Panc1 (cell line): ENCODE measurements at regions of chr13 and their contacts with region 1.

Region 1: DNA sequence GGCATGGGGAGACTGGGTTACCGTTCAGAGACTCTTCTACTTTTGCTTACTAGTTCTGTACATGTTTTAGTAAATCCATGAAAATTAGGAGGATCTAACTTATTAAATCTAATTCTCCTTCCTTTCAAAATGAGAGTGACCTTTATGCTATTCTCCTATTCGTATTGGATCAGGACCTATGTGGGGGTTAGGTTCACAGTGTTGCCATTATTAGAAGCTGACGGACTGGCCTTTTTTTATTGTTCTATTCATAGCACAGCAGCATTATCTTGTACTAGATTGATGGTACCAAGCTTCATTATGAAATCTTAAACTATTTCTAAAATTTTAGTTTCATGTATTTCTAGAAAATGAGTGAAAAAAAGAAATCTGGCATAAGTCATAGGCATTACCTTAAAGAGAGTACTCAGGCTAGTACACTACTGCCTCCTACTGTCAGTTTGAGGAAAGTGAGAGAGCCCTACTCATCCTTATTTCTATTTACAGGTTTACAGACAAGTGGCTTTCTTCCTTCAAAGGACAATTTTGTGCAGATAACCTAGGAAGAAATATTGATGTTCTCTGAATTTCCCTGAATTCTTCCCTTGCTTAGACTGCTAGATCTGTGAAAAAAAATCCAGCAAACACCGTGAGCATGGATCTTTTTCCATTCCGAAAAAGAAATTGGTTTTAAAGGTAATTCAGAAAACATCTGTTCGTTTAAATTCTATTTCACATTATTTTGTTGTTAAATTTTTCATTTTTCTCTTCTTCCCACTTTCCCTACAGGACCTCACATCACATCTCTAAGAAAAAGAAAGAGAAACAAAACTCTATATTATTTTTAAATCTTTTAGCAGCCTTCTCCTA is 485.5 kb downstream of the DIAPH3 start:
- DNase-seq: no peak
- ATAC-seq: no peak
- H3K4me3 ChIP-seq: no peak overlapping the region
- H3K27ac ChIP-seq: no peak overlapping the region
- H3K4me1 ChIP-seq: no peaks in the 10 kb centered on the region
- H3K27me3 ChIP-seq: no peaks in the 10 kb centered on the region
- CTCF ChIP-seq: peak; percentile 64; the same call in 1 of the 2 replicates

Region 2: GRCh38 chr13:59144700-59145099 is 533.5 kb before region 1 on chr13:
- CTCF ChIA-PET with region 1: no interaction called
- POLR2A ChIA-PET with region 1: no interaction called
- in situ Hi-C with region 1: no loop called
- intact Hi-C with region 1: loop called (anchors 5 kb)
- DNase-seq: no peak
- ATAC-seq: no peak
- H3K4me3 ChIP-seq: no peak overlapping the region
- H3K27ac ChIP-seq: no peak overlapping the region
- H3K4me1 ChIP-seq: no peaks in the 10 kb centered on the region
- H3K27me3 ChIP-seq: no peaks in the 10 kb centered on the region
- CTCF ChIP-seq: no peak

Region 3: DNA sequence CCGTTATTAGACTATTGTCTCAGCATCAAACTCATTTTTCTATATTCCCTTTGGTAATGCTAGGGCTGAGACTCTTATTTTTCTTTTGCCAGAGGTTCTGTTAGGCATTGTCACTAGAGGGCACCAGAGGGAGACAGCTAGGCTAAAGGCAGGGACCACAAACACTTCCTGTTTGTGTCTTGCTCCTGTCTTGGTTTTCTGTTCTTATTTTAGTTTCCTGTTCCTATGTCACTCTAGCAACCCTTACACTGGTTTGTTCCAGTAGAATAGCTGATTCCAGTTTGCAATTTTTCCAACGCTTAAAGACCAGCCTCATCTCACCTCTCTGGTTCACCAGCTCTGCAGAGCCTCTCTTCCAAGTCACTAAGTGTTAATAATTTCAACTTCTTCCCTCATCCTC is 286.5 kb before region 1 on chr13:
- CTCF ChIA-PET with region 1: interaction called, 3 read pairs
- POLR2A ChIA-PET with region 1: no interaction called
- in situ Hi-C with region 1: no loop called
- intact Hi-C with region 1: loop called (anchors 10 kb)
- DNase-seq: peak; percentile 36
- ATAC-seq: no peak
- H3K4me3 ChIP-seq: no peak overlapping the region
- H3K27ac ChIP-seq: no peak overlapping the region
- H3K4me1 ChIP-seq: no peaks in the 10 kb centered on the region
- H3K27me3 ChIP-seq: no peaks in the 10 kb centered on the region
- CTCF ChIP-seq: peak; percentile 64

Region 4: DNA sequence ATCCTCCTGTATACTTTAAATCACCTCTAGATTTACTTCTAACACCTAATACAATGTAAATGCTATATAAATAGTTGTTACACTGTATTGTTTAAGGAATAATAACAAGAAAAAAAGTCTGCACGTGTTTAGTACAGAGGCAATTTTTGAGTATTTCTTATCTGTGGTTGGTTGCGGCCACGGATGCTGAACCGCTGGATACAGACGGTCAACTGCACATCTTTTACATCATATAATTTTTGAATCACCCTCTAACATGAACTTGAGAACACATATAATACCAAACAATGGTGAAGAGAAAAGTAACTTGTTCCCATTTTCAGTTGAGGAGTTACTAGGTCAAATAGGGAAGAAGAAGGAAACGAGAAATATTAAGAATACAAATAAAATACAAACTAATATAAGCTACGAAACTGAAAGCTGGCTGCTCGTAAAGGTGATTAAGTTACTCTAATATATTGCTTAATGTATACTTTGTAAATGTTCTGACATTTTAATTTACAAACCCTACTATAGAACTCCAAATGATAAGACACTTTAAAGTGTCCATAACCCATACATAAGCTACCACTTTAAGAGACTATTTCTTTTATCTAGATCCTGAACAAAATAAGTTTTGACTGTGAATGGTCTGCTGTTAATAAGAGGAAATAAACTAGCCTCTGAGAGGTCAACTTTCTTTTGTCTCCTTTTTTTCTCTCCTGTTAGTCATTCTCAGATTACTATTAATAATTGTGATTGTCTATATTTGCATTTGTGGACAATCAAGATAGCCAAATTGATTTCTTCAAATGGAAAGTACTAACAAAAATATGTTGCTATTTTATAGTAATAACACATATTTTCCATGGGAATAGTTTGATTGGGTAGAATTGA is 28.1 kb after region 1 on chr13:
- CTCF ChIA-PET with region 1: no interaction called
- POLR2A ChIA-PET with region 1: no interaction called
- in situ Hi-C with region 1: no loop called
- intact Hi-C with region 1: no loop called
- DNase-seq: no peak
- ATAC-seq: no peak
- H3K4me3 ChIP-seq: no peak overlapping the region
- H3K27ac ChIP-seq: no peak overlapping the region
- H3K4me1 ChIP-seq: no peaks in the 10 kb centered on the region
- H3K27me3 ChIP-seq: no peaks in the 10 kb centered on the region
- CTCF ChIP-seq: no peak

Region 5: DNA sequence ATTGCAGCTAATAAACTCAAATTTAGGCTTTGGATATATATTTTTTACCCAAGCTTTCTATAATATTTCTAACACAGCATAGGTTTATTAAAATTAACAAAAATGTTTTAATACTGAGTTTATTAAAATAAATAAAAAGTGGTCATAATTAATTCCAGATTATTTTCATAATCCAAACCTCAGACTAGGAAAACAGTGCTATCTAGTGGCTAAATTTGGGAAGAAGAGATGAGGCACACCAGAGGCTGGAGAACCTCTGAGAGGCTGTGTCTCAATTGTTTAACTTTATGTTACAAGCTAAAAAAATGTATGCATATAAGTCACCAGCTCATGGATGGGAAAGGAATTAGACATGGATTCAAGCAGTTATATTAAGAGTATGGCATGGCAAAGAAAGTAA is 93.1 kb after region 1 on chr13:
- CTCF ChIA-PET with region 1: no interaction called
- POLR2A ChIA-PET with region 1: no interaction called
- in situ Hi-C with region 1: no loop called
- intact Hi-C with region 1: loop called (anchors 2 kb)
- DNase-seq: no peak
- ATAC-seq: no peak
- H3K4me3 ChIP-seq: no peak overlapping the region
- H3K27ac ChIP-seq: no peak overlapping the region
- H3K4me1 ChIP-seq: no peaks in the 10 kb centered on the region
- H3K27me3 ChIP-seq: no peaks in the 10 kb centered on the region
- CTCF ChIP-seq: peak; percentile 54; the same call in 1 of the 2 replicates

Region 6: GRCh38 chr13:59890054-59890453 is 211.9 kb after region 1 on chr13:
- CTCF ChIA-PET with region 1: no interaction called
- POLR2A ChIA-PET with region 1: no interaction called
- in situ Hi-C with region 1: no loop called
- intact Hi-C with region 1: no loop called
- DNase-seq: no peak
- ATAC-seq: no peak
- H3K4me3 ChIP-seq: no peak overlapping the region
- H3K27ac ChIP-seq: no peak overlapping the region
- H3K4me1 ChIP-seq: no peaks in the 10 kb centered on the region
- H3K27me3 ChIP-seq: no peaks in the 10 kb centered on the region
- CTCF ChIP-seq: no peak

Region 7: DNA sequence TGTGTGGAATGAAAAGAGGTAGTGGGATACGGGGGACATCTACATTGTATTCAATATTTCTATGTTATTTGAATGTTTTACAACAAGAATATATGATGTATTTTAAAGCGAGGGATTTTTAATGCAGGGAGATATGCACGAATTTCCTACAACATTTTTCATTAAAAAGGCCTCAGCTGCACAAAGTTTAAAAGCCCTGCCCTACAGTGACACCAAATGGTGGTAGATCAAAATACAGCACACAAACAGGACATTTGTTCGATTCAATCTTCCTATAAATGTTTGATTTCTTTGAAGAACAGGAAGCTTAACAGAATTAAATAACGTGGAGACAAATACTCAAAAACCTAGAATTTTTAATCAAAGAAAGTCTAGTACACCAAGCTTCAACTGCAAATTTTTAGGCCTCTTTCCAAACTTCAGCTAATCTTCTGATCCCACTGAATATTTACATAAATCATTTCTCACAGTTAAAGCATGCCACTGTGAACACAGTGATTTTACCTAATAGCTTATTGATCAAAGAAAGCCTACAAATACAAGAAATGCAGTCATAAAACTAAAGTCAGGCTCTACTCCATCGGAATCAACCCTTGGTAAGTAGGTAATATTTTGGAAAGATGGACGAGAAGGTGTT is 228.3 kb after region 1 on chr13:
- CTCF ChIA-PET with region 1: no interaction called
- POLR2A ChIA-PET with region 1: no interaction called
- in situ Hi-C with region 1: no loop called
- intact Hi-C with region 1: loop called (anchors 2 kb)
- DNase-seq: no peak
- ATAC-seq: no peak
- H3K4me3 ChIP-seq: no peak overlapping the region
- H3K27ac ChIP-seq: no peak overlapping the region
- H3K4me1 ChIP-seq: no peaks in the 10 kb centered on the region
- H3K27me3 ChIP-seq: no peaks in the 10 kb centered on the region
- CTCF ChIP-seq: peak; percentile 54; the same call in 1 of the 2 replicates